ENCODE measurements at regions of chr11 and their contacts with region 1.

Region 1: GRCh38 chr11:6443269-6444003 is 2.6 kb upstream of the HPX start:
- DNase-seq: peak; percentile 51 to 91 (median 78)

Region 2: DNA sequence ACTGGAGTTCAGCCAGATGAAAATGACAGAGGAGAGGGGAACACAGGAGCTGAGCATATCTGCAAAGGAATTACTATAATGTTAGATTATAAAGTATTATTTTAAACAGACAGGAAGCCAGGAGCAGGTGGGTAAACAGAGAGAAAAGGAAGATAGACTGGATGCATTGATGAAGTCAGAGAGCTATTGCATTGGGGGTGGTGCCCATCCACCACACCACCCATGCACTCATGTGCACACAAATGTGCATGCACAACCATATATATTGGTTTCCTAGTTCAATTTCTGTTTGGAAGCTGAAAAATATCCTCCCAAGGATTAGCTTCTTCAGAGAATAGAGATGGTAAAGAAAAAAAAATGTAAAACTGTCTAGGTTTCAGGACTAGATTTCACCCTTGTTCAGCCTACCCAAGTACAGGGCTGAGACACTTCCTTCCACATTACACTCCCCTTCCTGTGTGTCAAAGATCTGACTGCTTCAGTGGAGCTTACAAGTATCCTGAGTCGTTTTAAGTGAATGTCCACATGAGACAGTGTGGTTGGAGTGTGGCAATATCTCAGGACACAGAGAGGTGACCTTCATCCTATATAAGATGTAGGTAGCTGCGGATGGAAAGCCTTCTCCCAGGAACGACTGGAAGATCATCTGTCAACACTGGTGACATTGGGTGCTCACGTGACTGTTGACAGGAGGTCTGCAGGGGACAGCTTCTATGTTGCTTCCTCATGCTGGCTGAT is 65.4 kb before region 1 on chr11:
- intact Hi-C with region 1: loop called (anchors 2 kb)
- DNase-seq: no peak

Measured in head of caudate nucleus (tissue), 42 donors.